ENCODE measurements at regions of chrX and their contacts with region 1.

Region 1: DNA sequence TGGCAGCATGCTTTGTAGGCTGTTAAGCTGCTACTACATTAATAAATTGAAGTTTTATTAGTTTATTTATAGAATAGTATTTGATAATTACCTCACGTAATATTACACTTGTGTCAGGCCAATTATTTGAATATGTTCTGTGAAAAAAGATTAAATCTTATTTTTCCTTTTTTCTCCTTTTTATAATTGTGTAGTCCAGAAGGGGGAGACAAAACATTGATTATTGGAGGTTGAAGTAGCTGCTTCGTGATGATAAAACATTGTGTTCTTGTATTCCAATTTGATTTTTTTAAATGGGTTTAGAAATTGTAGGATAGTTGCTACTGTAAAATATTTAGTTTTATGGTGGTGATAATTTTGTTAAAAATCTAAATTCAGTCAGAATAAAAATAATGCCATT is 85.7 kb downstream of the DIAPH2 start:
- DNase-seq: no peak
- ATAC-seq: no peak
- H3K4me3 Mint-ChIP-seq: no peak overlapping the region
- H3K27ac Mint-ChIP-seq: no peak overlapping the region
- H3K4me1 Mint-ChIP-seq: no peaks in the 10 kb centered on the region
- H3K27me3 Mint-ChIP-seq: no peaks in the 10 kb centered on the region

Region 2: GRCh38 chrX:97743014-97743413 is 972.7 kb after region 1 on chrX:
- CTCF ChIA-PET with region 1: no interaction called
- POLR2A ChIA-PET with region 1: no interaction called
- intact Hi-C with region 1: loop called in 1 of 2 experiments (anchors 10 kb)
- DNase-seq: peak; percentile 48
- ATAC-seq: no peak
- H3K4me3 Mint-ChIP-seq: no peak overlapping the region
- H3K27ac Mint-ChIP-seq: no peak overlapping the region
- H3K4me1 Mint-ChIP-seq: no peaks in the 10 kb centered on the region
- H3K27me3 Mint-ChIP-seq: peaks cover 2% of the 10 kb centered on the region

Measured in activated CD4-positive, alpha-beta T cell treated with anti-CD3 and anti-CD28 coated beads for 36 hours (primary cell).